WTC11 (cell line): ENCODE measurements at regions of chr22 and their contacts with region 1.

Region 1: GRCh38 chr22:22591348-22592299 is 32.6 kb upstream of the PRAME start:
- DNase-seq: no peak
- ATAC-seq: no peak
- H3K4me3 Mint-ChIP-seq: no peak overlapping the region
- H3K27ac Mint-ChIP-seq: no peak overlapping the region
- H3K4me1 Mint-ChIP-seq: no peaks in the 10 kb centered on the region; the same call in 1 of the 2 replicates
- H3K27me3 Mint-ChIP-seq: peaks cover 93% of the 10 kb centered on the region
- CTCF ChIP-seq: no peak

Region 2: DNA sequence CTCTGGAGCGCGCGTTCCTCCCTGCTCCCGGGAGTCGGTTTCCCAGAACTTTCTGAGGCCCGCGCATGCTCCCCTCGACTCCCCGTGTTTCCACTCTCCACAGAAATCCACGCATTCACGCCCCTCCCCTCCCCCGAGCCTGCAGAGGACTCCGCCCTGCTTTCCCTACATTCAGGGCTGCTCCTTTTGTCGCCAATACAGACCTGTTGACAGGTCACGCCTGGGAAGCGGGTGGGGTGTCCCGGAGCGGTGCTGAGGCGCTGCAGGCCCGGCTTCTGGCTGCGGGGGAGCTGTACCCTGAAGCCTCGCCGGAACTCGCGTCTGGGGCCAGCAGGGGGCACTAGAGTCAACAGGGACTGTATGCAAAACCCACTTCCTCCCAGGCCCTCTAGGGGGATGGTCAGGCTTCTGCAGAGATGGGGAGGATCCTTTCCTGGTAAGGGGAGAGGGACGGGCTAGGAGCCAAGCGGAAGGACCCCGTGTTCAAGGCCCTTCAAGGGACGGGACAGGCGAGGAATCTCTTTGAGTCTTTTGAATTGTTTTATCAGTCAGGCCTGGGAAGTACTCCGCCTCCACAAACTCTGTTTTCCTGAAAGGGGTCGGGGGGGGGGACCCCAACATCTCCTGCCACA is 32.5 kb before region 1 on chr22 and contains the start of gene PRAME:
- CTCF ChIA-PET with region 1: interaction called, 16 read pairs
- POLR2A ChIA-PET with region 1: no interaction called
- DNase-seq: peak; percentile 93
- ATAC-seq: peak; percentile 97
- H3K4me3 Mint-ChIP-seq: no peak within 1 kb of the TSS
- H3K27ac Mint-ChIP-seq: no peak within 1 kb of the TSS
- H3K4me1 Mint-ChIP-seq: no peaks in the 10 kb centered on the region
- H3K27me3 Mint-ChIP-seq: peaks cover 79% of the 10 kb centered on the region
- CTCF ChIP-seq: peak; percentile 89
- total RNA-seq, gene PRAME: 1.4 to 1.7 TPM (median 1.5 TPM) in 3 replicates

Region 3: DNA sequence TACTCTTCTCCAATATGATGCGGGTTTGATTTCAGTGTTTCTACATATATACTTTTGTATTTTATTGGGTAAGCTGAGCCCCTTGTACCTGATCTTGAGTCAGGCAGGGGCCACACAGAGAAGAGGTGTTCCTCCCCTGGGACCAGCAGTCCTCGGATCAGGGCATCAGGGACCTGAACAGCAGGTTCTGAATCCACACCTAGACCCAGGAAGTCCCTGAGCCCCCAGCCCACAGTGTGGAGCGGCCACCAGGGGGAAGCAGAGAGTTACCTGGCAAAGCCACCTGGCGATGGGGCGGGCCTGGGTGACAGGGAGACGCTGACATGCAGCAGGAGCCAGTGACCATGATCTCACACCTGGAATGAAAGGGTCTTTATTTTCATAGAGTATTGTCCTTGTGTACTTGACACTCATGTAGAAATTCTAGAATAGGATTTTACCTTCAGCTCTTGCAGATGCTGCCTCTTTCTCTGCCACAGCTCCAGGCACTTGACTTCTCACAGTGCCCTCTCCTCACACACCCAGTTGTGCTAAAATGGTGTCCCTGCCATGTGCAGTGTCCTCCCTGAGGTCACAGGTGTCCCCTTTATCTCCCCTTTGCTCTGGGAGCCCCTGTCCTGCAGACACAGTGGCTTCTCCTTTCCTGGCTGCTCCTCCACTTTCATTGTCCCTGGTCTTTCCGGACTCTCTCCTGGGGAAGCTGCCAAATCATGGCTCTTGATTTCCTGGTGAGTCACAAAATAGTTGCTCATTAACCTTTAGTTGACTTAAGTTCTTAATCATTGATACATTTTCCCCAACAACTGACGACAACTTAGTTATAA is 101.3 kb after region 1 on chr22:
- CTCF ChIA-PET with region 1: interaction called, 13 read pairs
- POLR2A ChIA-PET with region 1: no interaction called
- DNase-seq: peak; percentile 80
- ATAC-seq: peak; percentile 88
- H3K4me3 Mint-ChIP-seq: no peak overlapping the region
- H3K27ac Mint-ChIP-seq: no peak overlapping the region
- H3K4me1 Mint-ChIP-seq: peaks cover 4% of the 10 kb centered on the region; the same call in 1 of the 2 replicates
- H3K27me3 Mint-ChIP-seq: peaks cover 98% of the 10 kb centered on the region
- CTCF ChIP-seq: no peak; the same call in 1 of the 2 replicates